ENCODE measurements at regions of chr22 and their contacts with region 1.

Region 1: DNA sequence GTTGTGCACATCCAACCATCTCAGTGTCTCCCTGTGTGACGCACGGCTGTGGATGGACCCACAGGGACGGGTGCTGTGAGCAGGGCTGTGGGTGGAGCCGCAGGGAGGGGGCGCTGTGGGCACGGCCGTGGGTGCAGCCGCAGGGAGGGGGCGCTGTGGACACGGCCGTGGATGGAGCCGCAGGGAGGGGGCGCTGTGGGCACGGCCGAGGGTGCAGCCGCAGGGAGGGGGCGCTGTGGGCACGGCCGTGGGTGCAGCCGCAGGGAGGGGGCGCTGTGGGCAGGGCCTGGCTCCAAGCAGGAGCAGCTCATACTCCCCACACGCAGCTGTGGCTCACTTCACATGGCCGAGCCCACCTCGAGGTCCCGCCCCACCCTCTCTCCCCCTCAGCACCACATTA is 6.0 kb upstream of the MAPK11 start:
- DNase-seq: peak in 1 of 2 donors; percentile 77
- ATAC-seq: peak; percentile 39 to 82 (median 69)
- H3K4me3 ChIP-seq: no peak overlapping the region
- H3K4me3 Mint-ChIP-seq: no peak overlapping the region
- H3K27ac ChIP-seq: no peak overlapping the region
- H3K27ac Mint-ChIP-seq: no peak overlapping the region
- H3K4me1 ChIP-seq: peaks cover 11% of the 10 kb centered on the region
- H3K4me1 Mint-ChIP-seq: peaks cover 4 to 6% of the 10 kb centered on the region in 2 donors
- H3K27me3 ChIP-seq: peaks cover 4% of the 10 kb centered on the region
- H3K27me3 Mint-ChIP-seq: peaks cover 6 to 7% of the 10 kb centered on the region in 2 donors
- CTCF ChIP-seq: no peak

Region 2: GRCh38 chr22:50498322-50498890 is 222.3 kb after region 1 on chr22:
- intact Hi-C with region 1: loop called (anchors 10 kb)
- DNase-seq: peak; percentile 50 to 87
- ATAC-seq: peak; percentile 80 to 96 (median 95)
- H3K4me3 ChIP-seq: no peak overlapping the region
- H3K4me3 Mint-ChIP-seq: no peak overlapping the region
- H3K27ac ChIP-seq: no peak overlapping the region
- H3K27ac Mint-ChIP-seq: no peak overlapping the region
- H3K4me1 ChIP-seq: peaks cover 6% of the 10 kb centered on the region
- H3K4me1 Mint-ChIP-seq: no peaks in the 10 kb centered on the region
- H3K27me3 ChIP-seq: no peaks in the 10 kb centered on the region
- H3K27me3 Mint-ChIP-seq: peaks cover 0 to 7% of the 10 kb centered on the region in 2 donors
- CTCF ChIP-seq: peak; percentile 64

Measured in natural killer cell (primary cell).